Left ventricle myocardium superior (tissue), 1 donor: ENCODE measurements at regions of chr5 and their contacts with region 1.

Region 1: GRCh38 chr5:100424017-100424416 is 111.2 kb upstream of the FAM174A start:
- DNase-seq: no peak
- ATAC-seq: no peak

Region 2: DNA sequence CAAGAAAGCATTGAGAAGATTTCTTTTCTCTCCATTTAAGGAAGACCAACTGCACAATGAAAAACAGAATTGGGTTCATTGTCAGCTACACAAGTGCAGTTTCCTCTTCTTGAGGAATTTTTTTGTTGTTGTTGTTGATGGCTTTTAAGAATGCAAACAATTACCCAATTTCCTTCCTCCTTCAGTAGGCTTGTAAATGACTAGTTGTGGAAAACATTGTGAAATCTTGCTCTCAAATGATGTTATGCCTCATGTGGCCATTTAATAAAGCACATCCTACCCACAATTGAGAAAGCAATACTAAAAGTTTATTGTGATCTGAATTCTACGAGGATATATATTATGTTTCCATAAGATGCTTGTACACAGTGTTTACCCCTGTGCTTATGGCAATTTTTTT is 282.8 kb after region 1 on chr5:
- intact Hi-C with region 1: no loop called
- DNase-seq: no peak
- ATAC-seq: peak; percentile 41

Region 3: DNA sequence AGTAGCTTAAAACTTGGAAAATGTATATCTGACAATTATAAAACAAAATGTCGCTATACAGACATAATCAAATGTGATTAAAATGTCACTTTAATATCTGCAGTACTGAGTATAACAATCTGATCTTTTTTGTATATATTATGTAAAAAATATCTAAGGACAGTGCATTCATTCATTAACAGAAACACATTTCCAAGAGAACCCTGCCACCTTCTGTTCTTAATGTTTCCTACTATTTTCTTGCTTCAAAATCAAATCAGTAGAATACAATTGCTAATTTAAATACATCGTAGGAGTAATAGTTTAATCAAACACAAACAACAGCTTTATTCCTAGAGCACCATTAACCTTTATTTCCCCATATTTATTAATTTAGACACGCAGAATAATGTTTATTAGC is 621.7 kb after region 1 on chr5:
- intact Hi-C with region 1: loop called (anchors 10 kb)
- DNase-seq: no peak
- ATAC-seq: no peak